Caco-2 (cell line): ENCODE measurements at regions of chr6 and their contacts with region 1.

Region 1: GRCh38 chr6:117555882-117556498 is 46.3 kb downstream of the GOPC start:
- DNase-seq: peak in 1 of 2 experiments; percentile 58
- H3K4me3 ChIP-seq: no peak overlapping the region
- H3K4me3 Mint-ChIP-seq: no peak overlapping the region
- H3K27ac Mint-ChIP-seq: no peak overlapping the region
- H3K4me1 ChIP-seq: peaks cover 24% of the 10 kb centered on the region
- H3K4me1 Mint-ChIP-seq: no peaks in the 10 kb centered on the region
- H3K27me3 ChIP-seq: no peaks in the 10 kb centered on the region
- H3K27me3 Mint-ChIP-seq: no peaks in the 10 kb centered on the region
- CTCF ChIP-seq: peak; percentile 60 to 82

Region 2: DNA sequence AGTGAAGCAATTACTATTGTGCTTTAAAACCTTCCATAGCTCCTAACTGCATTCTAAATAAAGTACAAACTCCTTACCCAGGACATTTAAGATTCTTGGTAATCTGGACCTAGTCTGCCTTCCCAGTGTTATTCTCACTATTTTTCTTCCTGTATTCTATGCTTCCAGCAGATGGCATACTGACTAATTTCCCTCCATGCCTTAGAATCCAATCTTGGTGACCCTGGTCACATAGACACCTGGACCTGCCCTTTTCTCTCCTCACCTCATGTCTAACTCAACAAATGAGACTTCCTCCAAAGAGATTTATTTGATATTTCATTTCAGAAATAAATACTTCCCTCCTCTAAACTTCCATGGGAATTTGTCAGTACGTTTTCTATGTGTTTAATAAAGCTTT is 156.1 kb before region 1 on chr6:
- CTCF ChIA-PET with region 1: no interaction called
- POLR2A ChIA-PET with region 1: no interaction called
- intact Hi-C with region 1: loop called (anchors 5 kb)
- DNase-seq: peak in 1 of 2 experiments; percentile 15
- H3K4me3 ChIP-seq: no peak overlapping the region
- H3K4me3 Mint-ChIP-seq: no peak overlapping the region
- H3K27ac Mint-ChIP-seq: no peak overlapping the region
- H3K4me1 ChIP-seq: no peaks in the 10 kb centered on the region
- H3K4me1 Mint-ChIP-seq: no peaks in the 10 kb centered on the region
- H3K27me3 ChIP-seq: no peaks in the 10 kb centered on the region
- H3K27me3 Mint-ChIP-seq: no peaks in the 10 kb centered on the region
- CTCF ChIP-seq: peak; percentile 29 to 48